ENCODE measurements at regions of chr1 and their contacts with region 1.

Region 1: GRCh38 chr1:208093754-208094719 is 150.1 kb downstream of the PLXNA2 start:
- DNase-seq: peak; percentile 47 to 68
- ATAC-seq: peak; percentile 74 to 95; a peak in 5 of 6 replicates
- H3K4me3 ChIP-seq: no peak overlapping the region
- H3K27ac ChIP-seq: no peak overlapping the region
- H3K4me1 ChIP-seq: no peaks in the 10 kb centered on the region
- CTCF ChIP-seq: peak; percentile 66
- EP300 ChIP-seq: no peak
- POLR2A ChIP-seq: no peak
- RAD21 ChIP-seq: peak; percentile 41 to 49

Region 2: GRCh38 chr1:208071435-208072031 is 22.5 kb before region 1 on chr1:
- CTCF ChIA-PET with region 1: interaction called, 11 read pairs
- POLR2A ChIA-PET with region 1: no interaction called
- DNase-seq: no peak
- ATAC-seq: no peak
- H3K4me3 ChIP-seq: no peak overlapping the region
- H3K27ac ChIP-seq: no peak overlapping the region
- H3K4me1 ChIP-seq: no peaks in the 10 kb centered on the region
- CTCF ChIP-seq: no peak
- EP300 ChIP-seq: no peak
- POLR2A ChIP-seq: no peak
- RAD21 ChIP-seq: no peak

Region 3: GRCh38 chr1:208081972-208082371 is 12.1 kb before region 1 on chr1:
- CTCF ChIA-PET with region 1: interaction called, 11 read pairs
- POLR2A ChIA-PET with region 1: no interaction called
- DNase-seq: no peak
- ATAC-seq: no peak
- H3K4me3 ChIP-seq: no peak overlapping the region
- H3K27ac ChIP-seq: no peak overlapping the region
- H3K4me1 ChIP-seq: no peaks in the 10 kb centered on the region
- CTCF ChIP-seq: no peak
- EP300 ChIP-seq: no peak
- POLR2A ChIP-seq: no peak
- RAD21 ChIP-seq: no peak

Measured in A549 (cell line).